Activated naive CD4-positive, alpha-beta T cell treated with anti-CD3 and anti-CD28 coated beads for 36 hours (primary cell): ENCODE measurements at regions of chr21 and their contacts with region 1.

Region 1: GRCh38 chr21:42233067-42233961 is 14.4 kb downstream of the ABCG1 start:
- DNase-seq: peak; percentile 95
- H3K4me3 Mint-ChIP-seq: peak overlapping the region; percentile 72
- H3K27ac Mint-ChIP-seq: peak overlapping the region; percentile 95
- H3K4me1 Mint-ChIP-seq: peaks cover 95% of the 10 kb centered on the region
- H3K27me3 Mint-ChIP-seq: no peaks in the 10 kb centered on the region

Region 2: GRCh38 chr21:41926117-41926806 is 307.1 kb before region 1 on chr21:
- CTCF ChIA-PET with region 1: no interaction called
- intact Hi-C with region 1: loop called (anchors 10 kb)
- DNase-seq: peak; percentile 53
- H3K4me3 Mint-ChIP-seq: peak overlapping the region; percentile 85
- H3K27ac Mint-ChIP-seq: peak overlapping the region; percentile 97
- H3K4me1 Mint-ChIP-seq: peaks cover 71% of the 10 kb centered on the region
- H3K27me3 Mint-ChIP-seq: no peaks in the 10 kb centered on the region

Region 3: GRCh38 chr21:42199488-42200458 is 33.5 kb before region 1 on chr21:
- CTCF ChIA-PET with region 1: interaction called, 7 read pairs
- intact Hi-C with region 1: loop called (anchors 1 kb)
- DNase-seq: peak; percentile 43
- H3K4me3 Mint-ChIP-seq: no peak overlapping the region
- H3K27ac Mint-ChIP-seq: peak overlapping the region; percentile 79
- H3K4me1 Mint-ChIP-seq: peaks cover 49% of the 10 kb centered on the region
- H3K27me3 Mint-ChIP-seq: no peaks in the 10 kb centered on the region

Region 4: DNA sequence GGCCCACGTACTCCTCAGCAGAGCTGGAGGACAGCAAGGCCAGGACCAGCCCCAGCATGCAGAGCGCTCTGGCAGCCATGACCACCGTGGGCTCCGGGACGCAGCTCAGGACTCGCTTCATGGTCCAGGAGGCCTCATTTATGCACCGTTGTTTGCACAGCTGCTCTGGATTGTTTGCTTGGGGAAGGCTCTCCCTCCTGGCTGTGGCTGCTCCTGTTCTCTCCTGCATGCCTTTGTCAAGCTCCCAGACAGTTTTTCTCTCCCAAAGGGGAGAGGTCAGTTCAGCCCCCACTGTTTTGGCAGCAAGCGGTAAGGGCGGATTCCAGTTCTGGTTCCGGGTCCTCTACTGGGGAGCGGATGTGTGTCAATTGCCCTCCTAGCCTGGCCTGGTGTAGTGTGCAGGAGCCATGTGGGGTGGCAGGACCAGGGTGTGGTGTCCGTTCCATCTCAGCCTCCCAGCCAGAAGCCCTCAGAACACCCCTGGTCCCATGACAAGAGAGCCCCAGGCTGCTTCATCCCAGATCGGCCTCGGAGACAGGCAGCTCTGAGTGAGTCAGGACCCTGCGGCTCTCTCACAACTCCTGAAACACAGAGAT is 82.1 kb after region 1 on chr21 and contains the start of gene TFF3:
- CTCF ChIA-PET with region 1: no interaction called
- intact Hi-C with region 1: no loop called
- DNase-seq: no peak
- H3K4me3 Mint-ChIP-seq: no peak within 1 kb of the TSS
- H3K27ac Mint-ChIP-seq: no peak within 1 kb of the TSS
- H3K4me1 Mint-ChIP-seq: peaks cover 2% of the 10 kb centered on the region
- H3K27me3 Mint-ChIP-seq: peaks cover 3% of the 10 kb centered on the region
- total RNA-seq, gene TFF3: not detected

Region 5: GRCh38 chr21:42414928-42415769 is 181.8 kb after region 1 on chr21:
- CTCF ChIA-PET with region 1: no interaction called
- intact Hi-C with region 1: loop called (anchors 1 kb)
- DNase-seq: peak; percentile 99
- H3K4me3 Mint-ChIP-seq: peak overlapping the region; percentile 64
- H3K27ac Mint-ChIP-seq: peak overlapping the region; percentile 94
- H3K4me1 Mint-ChIP-seq: peaks cover 64% of the 10 kb centered on the region
- H3K27me3 Mint-ChIP-seq: no peaks in the 10 kb centered on the region